ENCODE measurements at regions of chr1 and their contacts with region 1.

Region 1: DNA sequence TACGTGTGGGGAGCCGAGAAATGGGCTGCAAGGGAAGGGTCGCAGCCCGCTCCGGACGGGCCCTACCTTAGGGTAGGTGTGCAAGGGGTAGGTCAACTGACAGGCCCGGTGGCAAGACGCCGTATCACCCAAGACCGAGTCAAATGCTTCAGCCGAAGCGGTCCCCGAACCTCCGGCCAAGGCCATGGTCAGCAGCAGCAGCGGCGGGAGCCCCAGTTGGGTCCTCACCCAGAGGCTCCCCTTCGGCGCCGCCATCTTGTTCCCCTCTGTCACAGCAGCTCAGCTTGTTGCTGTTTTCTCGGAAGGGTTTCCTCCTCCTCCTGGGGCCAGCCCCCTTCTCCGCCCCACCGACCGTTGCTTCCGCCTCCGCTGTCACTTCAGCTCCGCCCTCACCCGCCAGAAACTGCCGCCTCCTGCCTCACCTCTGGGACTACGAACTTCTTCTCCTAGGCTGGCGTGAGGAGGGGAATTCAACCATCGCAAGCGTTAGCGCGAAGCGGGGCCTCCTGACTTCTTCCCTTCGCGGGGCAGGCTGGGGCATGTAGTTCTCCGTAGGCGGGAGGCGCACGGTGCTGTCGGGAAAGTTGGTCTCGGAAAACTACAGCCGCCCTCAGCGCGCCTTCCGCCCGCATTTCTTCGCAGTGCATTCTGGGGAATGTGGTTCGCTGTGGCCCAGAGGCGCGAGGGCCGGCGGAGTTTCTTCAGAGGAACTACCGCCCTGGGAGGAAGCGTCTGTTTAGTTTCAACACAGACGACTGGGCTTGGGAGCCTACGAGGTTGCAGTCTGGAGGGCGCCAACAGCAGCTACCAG is at the starts of genes TCEANC2 and TMEM59:
- DNase-seq: peak; percentile 84 to 99 (median 98)
- ATAC-seq: peak; percentile 94
- H3K4me3 ChIP-seq: peak within 1 kb of the TSS; percentile 94
- H3K4me3 Mint-ChIP-seq: no peak within 1 kb of the TSS
- H3K27ac ChIP-seq: peak within 1 kb of the TSS; percentile 92
- H3K27ac Mint-ChIP-seq: no peak within 1 kb of the TSS
- H3K4me1 ChIP-seq: peaks cover 23 to 34% of the 10 kb centered on the region in 2 donors
- H3K4me1 Mint-ChIP-seq: peaks cover 27 to 62% (median 52%) of the 10 kb centered on the region in 7 donors
- H3K27me3 ChIP-seq: no peaks in the 10 kb centered on the region
- H3K27me3 Mint-ChIP-seq: no peaks in the 10 kb centered on the region
- total RNA-seq, gene TCEANC2: 6.3 to 15.1 (median 12.2) TPM
- total RNA-seq, gene TMEM59: 127 to 197 (median 183) TPM

Region 2: DNA sequence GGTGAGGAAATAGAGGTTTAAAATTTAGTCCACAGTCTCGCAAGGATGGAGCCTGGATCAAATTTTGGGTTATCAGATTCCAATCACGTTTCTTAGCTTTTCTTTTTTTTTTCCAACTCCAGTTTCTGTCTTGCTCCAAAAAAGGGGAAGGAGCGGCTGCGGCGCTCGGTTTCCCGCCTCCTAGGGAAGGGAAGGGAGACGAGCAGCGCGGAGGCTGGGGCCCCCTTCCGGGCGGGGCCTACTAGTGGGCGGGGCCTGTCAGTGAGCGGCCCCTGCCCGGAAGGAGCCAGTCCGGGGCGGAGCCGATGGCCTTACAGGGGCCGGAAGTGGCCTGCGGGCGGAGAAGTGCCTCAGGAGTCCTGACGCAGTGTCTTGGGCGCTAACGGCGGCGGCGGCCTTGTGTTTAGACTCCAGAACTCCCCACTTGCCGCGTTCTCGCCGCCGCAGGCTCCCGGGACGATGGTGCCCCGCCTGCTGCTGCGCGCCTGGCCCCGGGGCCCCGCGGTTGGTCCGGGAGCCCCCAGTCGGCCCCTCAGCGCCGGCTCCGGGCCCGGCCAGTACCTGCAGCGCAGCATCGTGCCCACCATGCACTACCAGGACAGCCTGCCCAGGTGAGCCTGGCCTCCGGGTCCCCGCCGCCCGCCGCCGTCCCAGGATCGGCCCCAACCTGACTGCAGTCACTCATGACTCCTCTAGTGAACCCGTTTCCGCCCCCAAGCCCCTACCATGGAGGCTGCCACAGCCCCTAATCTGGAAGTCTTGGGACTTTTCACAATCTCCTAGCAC is 856.5 kb before region 1 on chr1 and contains the start of gene CPT2:
- CTCF ChIA-PET with region 1: no interaction called
- POLR2A ChIA-PET with region 1: no interaction called
- intact Hi-C with region 1: loop called (anchors 1 to 5 kb)
- DNase-seq: peak; percentile 78 to 94 (median 89)
- ATAC-seq: peak; percentile 99
- H3K4me3 ChIP-seq: peak within 1 kb of the TSS; percentile 91
- H3K4me3 Mint-ChIP-seq: peak within 1 kb of the TSS; percentile 88 to 100 (median 98)
- H3K27ac ChIP-seq: peak within 1 kb of the TSS; percentile 98
- H3K27ac Mint-ChIP-seq: peak within 1 kb of the TSS; percentile 90 to 100 (median 97)
- H3K4me1 ChIP-seq: peaks cover 16 to 20% of the 10 kb centered on the region in 2 donors
- H3K4me1 Mint-ChIP-seq: peaks cover 13 to 48% (median 44%) of the 10 kb centered on the region in 7 donors
- H3K27me3 ChIP-seq: no peaks in the 10 kb centered on the region
- H3K27me3 Mint-ChIP-seq: no peaks in the 10 kb centered on the region
- total RNA-seq, gene CPT2: 8.8 to 23.0 (median 13.4) TPM

Region 3: GRCh38 chr1:53326088-53326597 is 727.0 kb before region 1 on chr1:
- CTCF ChIA-PET with region 1: no interaction called
- POLR2A ChIA-PET with region 1: no interaction called
- intact Hi-C with region 1: loop called (anchors 1 to 5 kb)
- DNase-seq: peak; percentile 70 to 96 (median 79)
- ATAC-seq: peak; percentile 93
- H3K4me3 ChIP-seq: peak overlapping the region; percentile 88
- H3K4me3 Mint-ChIP-seq: peak overlapping the region; percentile 89 to 98 (median 94)
- H3K27ac ChIP-seq: peak overlapping the region; percentile 56
- H3K27ac Mint-ChIP-seq: peak overlapping the region; percentile 15 to 96 (median 73)
- H3K4me1 ChIP-seq: peaks cover 5 to 14% of the 10 kb centered on the region in 2 donors
- H3K4me1 Mint-ChIP-seq: peaks cover 6 to 52% (median 12%) of the 10 kb centered on the region in 7 donors
- H3K27me3 ChIP-seq: no peaks in the 10 kb centered on the region
- H3K27me3 Mint-ChIP-seq: no peaks in the 10 kb centered on the region

Region 4: GRCh38 chr1:54016313-54017262 is 36.6 kb before region 1 on chr1:
- CTCF ChIA-PET with region 1: no interaction called
- POLR2A ChIA-PET with region 1: no interaction called
- intact Hi-C with region 1: no loop called
- DNase-seq: no peak
- ATAC-seq: no peak
- H3K4me3 ChIP-seq: no peak overlapping the region
- H3K4me3 Mint-ChIP-seq: no peak overlapping the region
- H3K27ac ChIP-seq: no peak overlapping the region
- H3K27ac Mint-ChIP-seq: no peak overlapping the region
- H3K4me1 ChIP-seq: no peaks in the 10 kb centered on the region
- H3K4me1 Mint-ChIP-seq: peaks cover 0 to 2% (median 0%) of the 10 kb centered on the region in 7 donors
- H3K27me3 ChIP-seq: no peaks in the 10 kb centered on the region
- H3K27me3 Mint-ChIP-seq: peaks cover 0 to 4% (median 0%) of the 10 kb centered on the region in 5 donors

Region 5: DNA sequence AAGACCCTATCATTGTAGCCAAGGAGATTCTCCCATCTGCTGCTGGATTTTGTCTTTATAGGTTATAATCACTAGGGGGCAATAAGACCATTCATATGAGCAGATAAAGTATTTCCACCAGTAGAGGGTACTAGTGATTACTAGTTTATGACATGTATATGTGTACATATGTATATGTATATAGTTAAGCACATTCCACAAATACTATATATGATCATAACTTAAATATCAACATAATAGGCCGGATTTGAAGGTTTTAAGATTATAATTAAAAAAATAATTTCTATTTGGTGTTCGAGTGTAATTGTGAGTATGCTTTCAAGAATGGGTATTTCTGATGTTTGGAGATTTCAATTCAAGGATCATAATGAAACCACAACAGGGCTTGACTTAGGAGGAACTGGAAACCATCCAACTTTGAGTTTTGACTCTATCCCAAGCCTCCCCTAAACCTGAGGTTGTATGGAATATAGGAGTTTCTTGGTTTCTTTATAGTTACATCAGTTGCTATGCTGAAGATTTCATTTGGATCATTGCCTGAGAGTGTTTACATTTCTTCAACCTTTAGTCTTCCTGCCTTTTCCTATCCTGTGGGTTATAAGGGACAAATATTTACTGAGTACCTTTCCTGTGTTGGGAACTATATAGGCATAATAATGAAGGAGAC is 17.2 kb after region 1 on chr1:
- CTCF ChIA-PET with region 1: no interaction called
- POLR2A ChIA-PET with region 1: no interaction called
- intact Hi-C with region 1: loop called (anchors 1 kb)
- DNase-seq: peak in 7 of 9 donors; percentile 11 to 66 (median 54)
- ATAC-seq: peak; percentile 100
- H3K4me3 ChIP-seq: no peak overlapping the region
- H3K4me3 Mint-ChIP-seq: no peak overlapping the region
- H3K27ac ChIP-seq: no peak overlapping the region
- H3K27ac Mint-ChIP-seq: peak overlapping the region in 1 of 9 donors; percentile 16
- H3K4me1 ChIP-seq: no peaks in the 10 kb centered on the region
- H3K4me1 Mint-ChIP-seq: peaks cover 0 to 6% (median 0%) of the 10 kb centered on the region in 7 donors
- H3K27me3 ChIP-seq: no peaks in the 10 kb centered on the region
- H3K27me3 Mint-ChIP-seq: no peaks in the 10 kb centered on the region

Region 6: DNA sequence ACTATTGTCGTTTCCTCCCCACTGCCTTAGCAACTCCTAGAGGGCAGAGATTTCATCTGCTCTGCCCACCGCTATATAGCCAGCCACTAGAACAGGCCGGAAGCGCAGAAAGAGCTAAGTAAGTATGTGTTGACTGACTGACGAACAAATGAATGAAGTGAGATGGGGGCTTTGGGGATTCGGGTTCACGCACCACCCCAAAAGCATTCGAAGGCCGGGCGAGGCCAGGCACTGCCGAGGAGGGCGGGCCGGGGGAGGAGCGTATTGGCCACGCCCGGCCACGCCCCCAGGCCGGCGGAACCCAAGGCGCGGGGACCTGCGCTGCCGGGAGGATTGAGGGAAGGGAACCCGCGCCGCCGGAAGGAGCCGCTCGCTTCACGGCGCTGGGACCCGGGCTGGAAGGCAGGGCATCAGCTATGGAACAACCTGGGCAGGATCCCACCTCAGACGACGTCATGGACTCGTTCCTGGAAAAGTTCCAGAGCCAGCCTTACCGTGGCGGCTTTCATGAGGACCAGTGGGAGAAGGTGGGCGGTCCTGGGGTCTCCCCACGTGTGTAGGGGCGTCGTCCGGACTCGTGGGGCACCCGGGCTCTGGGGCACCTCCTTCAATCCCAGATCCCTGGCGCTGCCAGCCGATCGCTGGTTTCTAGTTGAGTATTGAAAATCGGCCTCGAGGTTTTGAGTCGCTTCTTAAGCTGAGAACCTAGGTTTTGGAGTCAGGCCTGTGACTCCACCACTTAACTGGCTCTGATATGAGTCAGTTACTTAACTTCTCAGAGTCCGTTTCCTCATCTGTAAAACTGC is 662.6 kb after region 1 on chr1 and contains the start of gene TTC4:
- CTCF ChIA-PET with region 1: no interaction called
- POLR2A ChIA-PET with region 1: interaction called, 3 read pairs
- intact Hi-C with region 1: loop called (anchors 1 kb)
- DNase-seq: peak; percentile 71 to 92 (median 85)
- ATAC-seq: peak; percentile 99
- H3K4me3 ChIP-seq: peak within 1 kb of the TSS; percentile 86
- H3K4me3 Mint-ChIP-seq: peak within 1 kb of the TSS; percentile 81 to 96 (median 88)
- H3K27ac ChIP-seq: peak within 1 kb of the TSS; percentile 84
- H3K27ac Mint-ChIP-seq: peak within 1 kb of the TSS; percentile 58 to 94 (median 91)
- H3K4me1 ChIP-seq: peaks cover 14 to 15% of the 10 kb centered on the region in 2 donors
- H3K4me1 Mint-ChIP-seq: peaks cover 15 to 42% (median 34%) of the 10 kb centered on the region in 7 donors
- H3K27me3 ChIP-seq: no peaks in the 10 kb centered on the region
- H3K27me3 Mint-ChIP-seq: no peaks in the 10 kb centered on the region
- total RNA-seq, gene TTC4: 11.6 to 25.8 (median 21.4) TPM

Region 7: GRCh38 chr1:55215256-55216021 is 1162.3 kb after region 1 on chr1 and contains the start of gene USP24:
- CTCF ChIA-PET with region 1: no interaction called
- POLR2A ChIA-PET with region 1: no interaction called
- intact Hi-C with region 1: loop called in 1 of 2 experiments (anchors 2 kb)
- DNase-seq: peak; percentile 81 to 88 (median 86)
- ATAC-seq: peak; percentile 93
- H3K4me3 ChIP-seq: peak within 1 kb of the TSS; percentile 66
- H3K4me3 Mint-ChIP-seq: peak within 1 kb of the TSS; percentile 75 to 97 (median 95)
- H3K27ac ChIP-seq: peak within 1 kb of the TSS; percentile 93
- H3K27ac Mint-ChIP-seq: peak within 1 kb of the TSS; percentile 93 to 99 (median 98)
- H3K4me1 ChIP-seq: peaks cover 38 to 48% of the 10 kb centered on the region in 2 donors
- H3K4me1 Mint-ChIP-seq: peaks cover 55 to 75% (median 64%) of the 10 kb centered on the region in 7 donors
- H3K27me3 ChIP-seq: no peaks in the 10 kb centered on the region
- H3K27me3 Mint-ChIP-seq: no peaks in the 10 kb centered on the region
- total RNA-seq, gene USP24: 47.3 to 91.4 (median 75.4) TPM